MCF 10A (cell line): ENCODE measurements at regions of chr6 and their contacts with region 1.

Region 1: GRCh38 chr6:82270881-82271645 is 23.5 kb upstream of the IBTK start:
- DNase-seq: peak; percentile 60
- H3K4me3 Mint-ChIP-seq: no peak overlapping the region
- H3K27ac Mint-ChIP-seq: no peak overlapping the region
- H3K4me1 Mint-ChIP-seq: peaks cover 9% of the 10 kb centered on the region
- H3K27me3 Mint-ChIP-seq: no peaks in the 10 kb centered on the region
- CTCF ChIP-seq: peak; percentile 55

Region 2: GRCh38 chr6:82247634-82248232 is 23.3 kb before region 1 on chr6 and contains the start of gene IBTK:
- CTCF ChIA-PET with region 1: interaction called, 17 read pairs
- POLR2A ChIA-PET with region 1: interaction called, 5 read pairs
- intact Hi-C with region 1: no loop called
- DNase-seq: peak; percentile 96
- H3K4me3 Mint-ChIP-seq: peak within 1 kb of the TSS; percentile 86
- H3K27ac Mint-ChIP-seq: peak within 1 kb of the TSS; percentile 95
- H3K4me1 Mint-ChIP-seq: peaks cover 31% of the 10 kb centered on the region
- H3K27me3 Mint-ChIP-seq: no peaks in the 10 kb centered on the region
- CTCF ChIP-seq: no peak
- total RNA-seq, gene IBTK: 59.0 and 66.2 TPM in 2 replicates

Region 3: DNA sequence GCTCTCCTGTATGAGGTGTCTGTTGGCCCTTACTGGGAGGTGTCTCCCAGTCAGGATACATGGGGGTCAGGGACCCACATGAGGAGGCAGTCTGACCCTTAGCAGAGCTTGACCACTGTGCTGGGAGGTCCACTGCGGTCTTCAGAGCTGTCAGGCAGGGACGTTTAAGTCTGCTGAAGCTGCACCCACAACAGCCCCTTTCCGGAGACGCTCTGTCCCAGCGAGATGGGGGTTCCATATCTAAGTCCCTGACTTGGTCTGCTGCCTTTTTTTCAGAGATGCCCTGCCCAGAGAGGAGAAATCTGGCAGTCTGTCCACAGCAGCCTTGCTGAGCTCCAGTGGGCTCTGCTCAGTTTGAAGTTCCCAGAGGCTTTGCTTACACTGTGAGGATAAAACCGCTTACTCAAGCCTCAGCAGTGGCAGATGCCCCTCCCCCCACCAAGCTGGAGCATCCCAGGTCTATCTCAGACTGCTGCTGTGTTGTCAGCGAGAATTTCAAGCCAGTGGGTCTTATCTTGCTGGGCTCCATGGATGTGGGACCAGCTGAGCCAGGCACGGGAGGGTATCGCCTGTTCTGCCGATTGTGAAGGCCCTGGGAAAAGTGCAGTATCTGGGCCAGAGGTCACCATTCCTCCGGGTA is 12.8 kb after region 1 on chr6:
- CTCF ChIA-PET with region 1: interaction called, 15 read pairs
- POLR2A ChIA-PET with region 1: no interaction called
- intact Hi-C with region 1: no loop called
- DNase-seq: no peak
- H3K4me3 Mint-ChIP-seq: no peak overlapping the region
- H3K27ac Mint-ChIP-seq: no peak overlapping the region
- H3K4me1 Mint-ChIP-seq: no peaks in the 10 kb centered on the region
- H3K27me3 Mint-ChIP-seq: no peaks in the 10 kb centered on the region
- CTCF ChIP-seq: no peak

Region 4: GRCh38 chr6:82494367-82494766 is 223.3 kb after region 1 on chr6:
- CTCF ChIA-PET with region 1: no interaction called
- POLR2A ChIA-PET with region 1: no interaction called
- intact Hi-C with region 1: no loop called
- DNase-seq: no peak
- H3K4me3 Mint-ChIP-seq: no peak overlapping the region
- H3K27ac Mint-ChIP-seq: no peak overlapping the region
- H3K4me1 Mint-ChIP-seq: no peaks in the 10 kb centered on the region
- H3K27me3 Mint-ChIP-seq: no peaks in the 10 kb centered on the region
- CTCF ChIP-seq: no peak

Region 5: GRCh38 chr6:82541306-82541705 is 270.2 kb after region 1 on chr6:
- CTCF ChIA-PET with region 1: interaction called, 6 read pairs
- POLR2A ChIA-PET with region 1: interaction called, 3 read pairs
- intact Hi-C with region 1: loop called (anchors 5 kb)
- DNase-seq: no peak
- H3K4me3 Mint-ChIP-seq: no peak overlapping the region
- H3K27ac Mint-ChIP-seq: no peak overlapping the region
- H3K4me1 Mint-ChIP-seq: no peaks in the 10 kb centered on the region
- H3K27me3 Mint-ChIP-seq: no peaks in the 10 kb centered on the region
- CTCF ChIP-seq: no peak

Region 6: DNA sequence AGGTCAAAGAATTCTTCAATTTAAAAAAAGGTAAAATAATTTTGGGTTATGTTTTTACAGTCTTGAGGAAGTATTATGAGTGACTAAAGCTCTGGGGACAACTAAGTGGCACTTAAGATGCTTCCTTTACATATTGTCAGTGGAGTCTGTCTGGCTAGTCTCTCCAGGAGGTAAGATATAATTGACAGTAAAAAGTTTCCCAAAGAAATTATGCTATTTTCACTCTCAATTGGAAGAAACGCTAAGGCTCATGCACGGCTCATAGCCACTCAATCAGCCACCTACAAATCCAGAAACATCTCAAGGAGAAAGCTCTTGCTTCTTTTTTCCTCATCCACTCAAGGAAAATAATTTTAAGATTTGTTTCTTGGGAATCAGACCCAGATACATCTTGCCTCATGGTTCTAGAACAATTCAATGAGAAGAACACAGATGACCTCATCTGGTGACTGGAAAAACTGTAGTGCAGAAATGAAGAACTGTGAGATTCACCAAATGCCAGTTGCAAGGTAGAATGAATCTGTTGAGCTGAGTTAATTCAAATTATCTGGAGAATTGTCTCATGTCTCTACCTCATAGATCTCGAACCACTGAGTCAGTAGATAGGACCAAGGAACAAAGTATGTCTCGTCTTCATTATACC is 345.4 kb after region 1 on chr6:
- CTCF ChIA-PET with region 1: interaction called, 37 read pairs
- POLR2A ChIA-PET with region 1: no interaction called
- intact Hi-C with region 1: loop called (anchors 1 kb)
- DNase-seq: peak; percentile 6
- H3K4me3 Mint-ChIP-seq: no peak overlapping the region
- H3K27ac Mint-ChIP-seq: no peak overlapping the region
- H3K4me1 Mint-ChIP-seq: no peaks in the 10 kb centered on the region
- H3K27me3 Mint-ChIP-seq: no peaks in the 10 kb centered on the region
- CTCF ChIP-seq: no peak